GM13977 (cell line): ENCODE measurements at regions of chr22 and their contacts with region 1.

Region 1: GRCh38 chr22:20069331-20070042 is 10.6 kb upstream of the DGCR8 start:
- DNase-seq: no peak
- CTCF ChIP-seq: no peak

Region 2: GRCh38 chr22:20027966-20028854 is 41.3 kb before region 1 on chr22:
- in situ Hi-C with region 1: loop called (anchors 5 kb)
- DNase-seq: no peak
- CTCF ChIP-seq: peak; percentile 29